ENCODE measurements at regions of chrX and their contacts with region 1.

Region 1: DNA sequence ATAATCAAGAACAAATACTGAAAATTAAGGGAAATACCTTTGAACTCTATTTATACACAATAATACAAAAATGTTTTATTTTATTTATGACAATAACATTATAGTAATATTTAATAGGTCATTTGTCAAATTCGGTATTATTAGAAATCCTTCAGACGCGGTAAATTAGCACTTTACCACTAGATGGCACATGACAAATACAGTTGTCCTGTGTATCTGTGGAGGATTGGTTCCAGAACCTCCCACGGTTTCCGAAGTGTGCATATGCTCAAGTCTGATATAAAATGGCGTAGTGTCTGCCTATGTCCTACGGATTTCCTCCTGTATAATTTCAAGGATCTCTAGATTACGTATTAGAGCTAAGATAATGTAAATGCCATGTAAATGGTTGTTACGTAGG is 8.1 kb upstream of the LINC00632 start:
- DNase-seq: peak; percentile 58
- ATAC-seq: peak; percentile 51
- H3K4me3 ChIP-seq: no peak overlapping the region
- H3K27ac ChIP-seq: no peak overlapping the region
- H3K4me1 ChIP-seq: no peaks in the 10 kb centered on the region
- H3K27me3 ChIP-seq: no peaks in the 10 kb centered on the region
- CTCF ChIP-seq: peak; percentile 56

Region 2: GRCh38 chrX:140022482-140022881 is 679.0 kb before region 1 on chrX:
- CTCF ChIA-PET with region 1: no interaction called
- POLR2A ChIA-PET with region 1: no interaction called
- intact Hi-C with region 1: no loop called
- DNase-seq: no peak
- ATAC-seq: no peak
- H3K4me3 ChIP-seq: no peak overlapping the region
- H3K27ac ChIP-seq: no peak overlapping the region
- H3K4me1 ChIP-seq: no peaks in the 10 kb centered on the region
- H3K27me3 ChIP-seq: no peaks in the 10 kb centered on the region
- CTCF ChIP-seq: no peak

Region 3: DNA sequence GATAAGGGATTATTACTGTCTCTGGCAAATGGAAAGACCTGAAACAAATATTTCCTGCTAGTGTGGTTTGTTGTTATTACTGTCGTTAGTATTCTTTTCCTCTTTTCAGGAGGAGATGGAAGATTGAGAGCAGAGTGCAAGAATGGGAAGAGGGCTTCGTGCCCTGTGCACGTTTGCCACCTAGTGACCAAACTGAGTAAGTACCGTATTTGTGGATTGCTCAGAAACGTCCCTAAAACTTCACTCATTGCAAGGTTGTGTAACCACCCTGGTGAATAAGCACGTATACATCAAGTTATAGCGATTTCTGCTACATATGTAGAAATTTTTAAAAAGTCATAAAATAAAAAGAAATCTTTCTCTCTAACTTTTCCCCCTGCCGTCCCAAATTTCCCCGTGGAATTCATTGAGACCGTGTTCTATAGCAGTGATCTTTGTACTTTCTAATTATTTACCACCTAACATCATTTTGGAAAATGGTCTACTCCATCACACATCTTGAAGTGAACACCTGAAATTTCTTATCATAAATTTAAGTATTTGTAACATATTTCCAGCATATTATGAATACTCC is 32.4 kb after region 1 on chrX:
- CTCF ChIA-PET with region 1: no interaction called
- POLR2A ChIA-PET with region 1: no interaction called
- intact Hi-C with region 1: loop called (anchors 1 kb)
- DNase-seq: peak; percentile 59
- ATAC-seq: peak; percentile 91
- H3K4me3 ChIP-seq: no peak overlapping the region
- H3K27ac ChIP-seq: no peak overlapping the region
- H3K4me1 ChIP-seq: no peaks in the 10 kb centered on the region
- H3K27me3 ChIP-seq: no peaks in the 10 kb centered on the region; the same call in 1 of the 2 replicates
- CTCF ChIP-seq: peak; percentile 79

Measured in PC-3 (cell line).